ENCODE measurements at regions of chr7 and their contacts with region 1.

Region 1: DNA sequence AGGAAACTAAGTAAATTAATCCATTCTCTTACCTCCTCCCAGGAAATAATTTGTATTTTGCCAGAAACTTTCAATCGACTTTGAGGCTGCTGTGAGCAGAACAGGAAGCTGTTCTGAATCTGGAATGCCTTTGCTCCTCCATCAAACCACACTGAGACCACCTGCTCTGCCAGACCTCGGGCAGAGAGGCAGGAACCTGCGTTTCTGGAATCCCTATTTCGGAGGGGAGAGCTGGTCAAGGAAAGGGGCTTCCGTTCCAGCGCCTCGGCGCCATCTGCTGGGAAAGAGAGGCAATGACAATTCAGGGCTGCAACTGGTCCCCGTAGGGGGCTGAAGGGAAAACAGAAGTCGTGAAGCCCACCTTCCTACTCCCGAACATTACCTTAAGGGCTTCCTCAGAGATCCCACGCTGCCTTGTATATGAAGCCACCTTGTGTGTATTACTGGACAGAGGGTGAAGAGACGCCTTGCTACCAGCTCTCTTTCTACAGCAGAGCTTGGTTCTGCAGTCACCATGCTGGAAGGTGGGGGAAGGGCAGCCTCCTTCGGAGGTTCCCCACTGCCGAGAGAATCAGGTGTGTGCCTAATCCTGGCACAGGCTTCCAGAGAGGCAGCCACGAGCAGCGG is 31.2 kb downstream of the ZNF467 start:
- DNase-seq: peak; percentile 57 to 93
- H3K4me3 ChIP-seq: peak overlapping the region; percentile 37 to 65 (median 58); a peak in 7 of 8 replicates
- H3K27ac ChIP-seq: no peak overlapping the region
- H3K4me1 ChIP-seq: peaks cover 0 to 4% (median 1%) of the 10 kb centered on the region in 4 experiments; a peak in 2 of 7 replicates
- H3K27me3 ChIP-seq: no peaks in the 10 kb centered on the region
- CTCF ChIP-seq: peak; percentile 81 to 92 (median 89)
- EP300 ChIP-seq: no peak
- POLR2A ChIP-seq: no peak
- RAD21 ChIP-seq: peak; percentile 82 to 87

Region 2: DNA sequence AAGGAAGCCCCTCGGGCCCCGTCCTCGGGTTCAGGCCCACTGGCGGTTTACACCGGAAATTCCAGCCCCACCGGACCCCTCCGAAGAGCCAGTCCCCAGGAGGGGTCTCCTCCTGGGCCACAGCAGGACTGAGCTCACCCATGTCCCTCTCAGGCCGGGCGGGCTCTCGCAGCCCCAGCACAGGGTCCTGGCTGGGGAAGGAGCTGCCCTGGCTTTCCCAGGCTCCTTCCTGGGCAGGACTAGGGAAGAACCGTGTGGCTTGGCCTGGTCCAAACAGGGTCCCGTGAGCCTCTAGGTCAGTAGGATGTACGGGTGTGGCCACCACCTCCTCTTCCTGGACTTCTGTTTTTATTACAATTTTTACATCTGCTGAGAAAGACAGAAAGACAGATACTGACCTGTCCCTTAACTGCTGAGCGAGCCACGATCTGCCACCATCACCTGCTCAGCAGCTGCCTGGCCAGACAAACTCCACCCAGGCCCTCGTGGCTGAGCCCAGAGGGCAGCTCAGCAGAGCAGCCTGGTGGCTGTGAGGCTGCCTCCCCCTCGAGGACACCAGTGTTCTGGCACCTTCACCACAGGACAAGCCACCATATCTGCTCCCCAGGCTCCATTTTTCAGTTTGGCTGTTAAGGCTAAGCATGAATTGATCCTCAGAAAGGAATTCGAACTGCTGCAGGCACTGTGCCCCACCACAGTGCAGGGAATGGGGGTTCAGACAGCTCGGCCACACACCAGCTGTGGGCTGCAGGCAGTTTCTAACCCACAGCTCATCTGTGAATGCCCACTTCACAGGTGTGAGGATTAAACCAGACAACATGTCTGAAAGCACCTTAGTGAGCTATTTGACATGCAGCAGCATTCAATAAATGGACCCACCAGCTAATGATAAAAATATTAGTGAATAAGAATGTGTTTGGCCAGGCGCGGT is 266.8 kb before region 1 on chr7:
- CTCF ChIA-PET with region 1: no interaction called
- POLR2A ChIA-PET with region 1: no interaction called
- DNase-seq: peak in 1 of 2 experiments; percentile 37
- H3K4me3 ChIP-seq: no peak overlapping the region
- H3K27ac ChIP-seq: no peak overlapping the region
- H3K4me1 ChIP-seq: peaks cover 0 to 11% (median 8%) of the 10 kb centered on the region in 4 experiments; a peak in 6 of 7 replicates
- H3K27me3 ChIP-seq: no peaks in the 10 kb centered on the region
- CTCF ChIP-seq: no peak
- EP300 ChIP-seq: no peak
- POLR2A ChIP-seq: no peak
- RAD21 ChIP-seq: no peak

Region 3: DNA sequence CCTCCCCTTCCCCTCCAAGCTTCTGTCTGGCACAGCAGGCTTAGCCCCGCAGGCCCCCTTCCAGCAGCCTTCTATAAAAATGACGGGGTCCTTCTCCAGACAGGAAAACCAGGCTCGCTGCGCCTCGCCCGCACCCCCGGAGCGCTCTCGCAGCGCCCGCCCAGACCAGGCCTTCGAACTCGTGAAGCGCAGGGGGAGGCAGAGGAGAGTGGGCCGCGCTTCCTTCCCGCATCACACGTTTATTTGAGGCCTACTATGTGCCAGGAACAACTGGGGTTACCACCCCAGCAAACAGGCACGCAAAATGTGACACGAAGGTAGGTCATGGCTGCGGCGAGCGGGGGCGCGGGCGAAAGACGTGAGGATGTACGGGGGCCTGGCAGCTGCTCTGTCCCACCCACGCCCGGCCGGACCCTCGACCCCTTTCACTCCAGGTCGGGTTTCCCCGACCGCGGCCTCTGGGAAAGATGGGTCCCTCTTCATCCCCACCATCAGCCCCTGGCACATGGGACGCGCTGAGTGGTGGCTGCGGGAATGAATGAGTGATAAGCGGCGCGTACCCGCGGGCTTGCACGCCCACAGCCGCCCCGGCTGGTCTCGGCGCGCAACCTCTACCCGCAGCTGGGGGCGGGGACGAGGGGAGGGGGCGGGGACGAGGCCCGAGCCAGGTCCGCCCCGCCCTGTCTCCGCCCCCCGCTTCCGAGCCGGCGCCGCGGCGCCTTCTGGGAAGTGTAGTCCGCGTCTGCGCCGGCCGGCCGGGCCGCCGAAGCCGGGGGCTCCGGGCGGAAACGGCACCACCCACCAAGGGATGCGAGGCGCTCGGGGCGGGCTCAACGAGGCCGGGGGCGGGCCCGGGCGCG is 27.9 kb before region 1 on chr7:
- CTCF ChIA-PET with region 1: interaction called, 13 read pairs
- POLR2A ChIA-PET with region 1: interaction called, 3 read pairs
- DNase-seq: peak; percentile 65 to 90
- H3K4me3 ChIP-seq: peak overlapping the region; percentile 57 to 95 (median 80)
- H3K27ac ChIP-seq: no peak overlapping the region
- H3K4me1 ChIP-seq: peaks cover 2 to 14% (median 7%) of the 10 kb centered on the region in 4 experiments
- H3K27me3 ChIP-seq: peaks cover 0 to 11% (median 7%) of the 10 kb centered on the region in 4 experiments; a peak in 4 of 7 replicates
- CTCF ChIP-seq: no peak
- EP300 ChIP-seq: no peak
- POLR2A ChIP-seq: no peak
- RAD21 ChIP-seq: no peak

Region 4: DNA sequence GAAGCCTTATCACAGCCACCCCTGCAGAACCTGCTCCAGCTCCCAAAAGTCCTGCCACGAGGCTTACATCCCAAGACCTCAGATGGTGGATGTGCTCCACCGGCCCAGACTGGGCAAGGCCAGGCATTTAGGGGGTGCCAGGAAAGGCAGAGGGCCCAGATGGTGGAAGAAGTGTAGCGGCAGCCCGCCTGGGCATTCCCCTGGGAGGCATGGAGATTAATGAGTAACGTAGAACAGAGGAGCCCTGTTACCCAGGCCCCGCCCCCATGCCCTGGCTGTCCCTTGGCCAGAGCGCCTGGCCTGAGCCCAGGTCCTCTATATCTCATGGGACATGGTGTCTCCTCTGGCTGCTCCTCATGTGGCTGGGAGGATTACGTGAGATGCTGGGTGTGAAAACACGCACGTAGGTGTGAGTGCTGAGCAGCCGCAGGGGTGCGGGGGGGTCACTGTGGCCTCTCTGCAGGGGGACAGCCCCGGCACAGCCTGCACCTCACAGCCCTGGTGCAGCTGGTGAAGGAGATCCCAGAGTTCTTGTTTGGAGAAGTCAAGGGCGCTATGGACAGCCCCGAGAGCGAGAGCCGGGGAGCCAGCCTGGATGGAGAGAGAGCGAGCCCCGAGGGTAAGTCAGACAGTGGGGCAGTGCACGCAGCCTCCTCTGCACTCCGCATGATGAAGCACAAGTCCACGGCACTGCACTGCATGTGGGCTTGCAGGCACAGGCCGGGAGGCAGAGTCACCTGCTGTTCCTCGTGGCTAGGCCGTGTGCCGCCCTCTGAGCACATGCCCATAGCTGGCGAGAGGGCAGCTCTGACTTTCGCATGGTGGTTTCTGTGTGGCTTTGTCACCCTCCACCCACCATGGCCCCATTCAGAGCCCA is 21.6 kb before region 1 on chr7:
- CTCF ChIA-PET with region 1: interaction called, 26 read pairs
- POLR2A ChIA-PET with region 1: interaction called, 3 read pairs
- DNase-seq: no peak
- H3K4me3 ChIP-seq: no peak overlapping the region
- H3K27ac ChIP-seq: no peak overlapping the region
- H3K4me1 ChIP-seq: peaks cover under 1 to 6% (median 4%) of the 10 kb centered on the region in 4 experiments
- H3K27me3 ChIP-seq: no peaks in the 10 kb centered on the region
- CTCF ChIP-seq: no peak
- EP300 ChIP-seq: no peak
- POLR2A ChIP-seq: no peak
- RAD21 ChIP-seq: no peak

Region 5: GRCh38 chr7:149729983-149730801 is 12.0 kb before region 1 on chr7:
- CTCF ChIA-PET with region 1: interaction called, 26 read pairs
- POLR2A ChIA-PET with region 1: no interaction called
- DNase-seq: no peak
- H3K4me3 ChIP-seq: no peak overlapping the region
- H3K27ac ChIP-seq: no peak overlapping the region
- H3K4me1 ChIP-seq: no peaks in the 10 kb centered on the region
- H3K27me3 ChIP-seq: no peaks in the 10 kb centered on the region
- CTCF ChIP-seq: no peak
- EP300 ChIP-seq: no peak
- POLR2A ChIP-seq: no peak
- RAD21 ChIP-seq: no peak; a peak in 1 of 4 replicates

Region 6: GRCh38 chr7:149753401-149754233 is 11.4 kb after region 1 on chr7:
- CTCF ChIA-PET with region 1: interaction called, 39 read pairs
- POLR2A ChIA-PET with region 1: interaction called, 3 read pairs
- DNase-seq: peak in 1 of 2 experiments; percentile 83
- H3K4me3 ChIP-seq: no peak overlapping the region
- H3K27ac ChIP-seq: no peak overlapping the region
- H3K4me1 ChIP-seq: no peaks in the 10 kb centered on the region
- H3K27me3 ChIP-seq: no peaks in the 10 kb centered on the region; a peak in 1 of 7 replicates
- CTCF ChIP-seq: peak; percentile 66 to 81 (median 75)
- EP300 ChIP-seq: no peak
- POLR2A ChIP-seq: no peak
- RAD21 ChIP-seq: peak; percentile 62 to 73

Region 7: DNA sequence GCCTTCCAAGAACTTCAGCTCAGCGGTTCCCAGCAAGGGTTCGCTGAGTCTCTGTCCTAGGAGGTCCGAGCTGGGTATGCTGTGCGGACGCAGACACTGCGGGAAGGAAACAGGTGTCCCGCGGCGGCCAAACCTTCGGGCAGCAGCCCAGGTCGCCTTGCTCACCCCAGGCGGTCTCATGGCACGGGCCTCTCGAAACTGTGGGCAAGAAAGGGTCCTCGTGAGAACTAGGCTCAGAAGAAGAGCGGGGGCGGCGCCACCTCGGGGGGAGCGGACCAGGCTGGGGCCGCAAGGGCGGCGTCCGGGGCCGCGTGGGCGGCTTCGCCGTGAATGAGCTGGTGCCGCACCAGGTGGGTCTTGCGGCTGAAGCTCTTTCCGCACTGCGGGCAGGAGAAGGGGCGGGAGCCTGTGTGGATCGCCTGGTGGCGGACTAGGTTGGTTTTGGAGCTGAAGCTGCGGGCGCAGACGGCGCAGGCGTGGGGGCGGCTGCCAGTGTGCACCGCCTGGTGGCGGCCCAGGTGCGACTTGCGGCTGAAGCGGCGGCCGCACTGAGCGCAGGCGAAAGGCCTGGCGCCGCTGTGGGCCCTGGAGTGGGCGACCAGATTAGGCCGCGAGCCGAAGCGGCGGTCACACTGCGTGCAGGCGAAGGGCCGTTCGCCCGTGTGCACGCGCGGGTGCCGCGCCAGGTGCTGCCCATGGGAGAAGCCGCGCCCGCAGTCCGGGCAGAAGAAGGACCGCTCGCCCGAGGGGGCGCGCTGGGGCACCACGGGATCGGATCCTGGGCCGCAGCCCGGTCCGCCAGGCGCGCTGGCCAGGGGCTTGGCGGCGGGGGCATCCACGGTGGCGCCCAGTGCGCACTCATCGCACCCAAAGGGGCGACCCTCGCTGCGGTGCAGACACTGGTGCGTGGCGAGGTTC is 22.6 kb after region 1 on chr7:
- CTCF ChIA-PET with region 1: interaction called, 23 read pairs
- POLR2A ChIA-PET with region 1: interaction called, 3 read pairs
- DNase-seq: peak in 1 of 2 experiments; percentile 73
- H3K4me3 ChIP-seq: peak overlapping the region; percentile 18 to 56 (median 38)
- H3K27ac ChIP-seq: no peak overlapping the region
- H3K4me1 ChIP-seq: peaks cover 0 to 14% (median 12%) of the 10 kb centered on the region in 4 experiments; a peak in 6 of 7 replicates
- H3K27me3 ChIP-seq: peaks cover 68 to 95% (median 87%) of the 10 kb centered on the region in 4 experiments
- CTCF ChIP-seq: peak in 2 of 3 experiments; percentile 33 to 51; a peak in 3 of 4 replicates
- EP300 ChIP-seq: no peak
- POLR2A ChIP-seq: no peak
- RAD21 ChIP-seq: peak; percentile 23 to 24; a peak in 2 of 4 replicates

Measured in H1 (cell line).